ENCODE measurements at regions of chr11 and their contacts with region 1.

Region 1: GRCh38 chr11:117226388-117227385 is 5.2 kb downstream of the PCSK7 start:
- DNase-seq: peak in 1 of 2 donors; percentile 58
- ATAC-seq: peak; percentile 58 to 81 (median 71)
- H3K4me3 ChIP-seq: no peak overlapping the region
- H3K27ac ChIP-seq: peak overlapping the region in 1 of 10 donors; percentile 38
- H3K4me1 ChIP-seq: peaks cover 14 to 40% (median 26%) of the 10 kb centered on the region in 9 donors
- H3K27me3 ChIP-seq: no peaks in the 10 kb centered on the region
- CTCF ChIP-seq: peak; percentile 71 to 90 (median 83)

Region 2: DNA sequence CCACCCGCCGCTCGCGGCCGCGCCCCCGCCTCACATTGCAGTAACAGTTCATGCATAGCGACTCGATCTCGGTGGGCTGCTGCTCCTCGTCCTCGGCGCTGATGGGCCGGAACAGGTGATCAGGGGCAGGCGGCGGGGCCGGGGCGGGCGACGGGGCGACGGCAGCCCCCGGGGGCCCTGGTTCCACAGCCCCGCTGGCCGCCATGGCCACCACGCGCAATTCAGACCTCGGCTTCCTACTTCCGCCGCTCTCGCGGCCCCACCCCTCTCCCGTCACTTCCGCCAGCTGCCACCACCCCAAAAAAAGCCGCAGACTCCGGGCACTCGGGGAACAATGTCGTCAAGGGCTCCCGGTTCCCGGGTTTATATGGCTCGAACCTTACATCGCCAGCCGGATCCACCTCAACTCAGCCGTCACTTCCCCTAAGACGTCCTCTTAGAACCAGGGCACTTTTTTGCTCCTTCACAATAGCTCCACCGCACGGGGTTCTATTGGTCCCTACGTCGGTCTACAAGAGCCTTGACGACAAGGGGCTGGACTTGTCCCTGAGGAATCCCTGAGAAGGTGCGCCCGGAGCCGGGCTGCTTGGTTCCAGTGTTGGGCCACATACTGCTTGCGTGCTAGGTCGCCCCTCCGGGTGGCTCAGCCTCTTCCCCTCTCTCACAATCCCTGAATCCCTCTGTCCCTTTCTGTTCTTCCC is 438.8 kb before region 1 on chr11 and contains the start of gene ZPR1:
- intact Hi-C with region 1: loop called in 9 of 10 experiments (anchors 2 to 10 kb)
- DNase-seq: peak; percentile 86 to 87
- ATAC-seq: peak; percentile 83 to 92 (median 90)
- H3K4me3 ChIP-seq: peak within 1 kb of the TSS; percentile 84 to 100 (median 94)
- H3K27ac ChIP-seq: peak within 1 kb of the TSS; percentile 2 to 94 (median 87)
- H3K4me1 ChIP-seq: peaks cover 7 to 35% (median 24%) of the 10 kb centered on the region in 9 donors
- H3K27me3 ChIP-seq: no peaks in the 10 kb centered on the region
- CTCF ChIP-seq: no peak
- total RNA-seq, gene ZPR1: 17.3 to 32.9 (median 22.6) TPM

Region 3: GRCh38 chr11:116871248-116871647 is 355.4 kb before region 1 on chr11:
- intact Hi-C with region 1: loop called in 6 of 10 experiments (anchors 5 to 10 kb)
- DNase-seq: peak in 1 of 2 donors; percentile 44
- ATAC-seq: peak in 6 of 8 donors; percentile 40 to 75 (median 51)
- H3K4me3 ChIP-seq: no peak overlapping the region
- H3K27ac ChIP-seq: peak overlapping the region in 9 of 10 donors; percentile 9 to 73 (median 58)
- H3K4me1 ChIP-seq: peaks cover 0 to 89% (median 30%) of the 10 kb centered on the region in 9 donors
- H3K27me3 ChIP-seq: no peaks in the 10 kb centered on the region
- CTCF ChIP-seq: no peak

Region 4: DNA sequence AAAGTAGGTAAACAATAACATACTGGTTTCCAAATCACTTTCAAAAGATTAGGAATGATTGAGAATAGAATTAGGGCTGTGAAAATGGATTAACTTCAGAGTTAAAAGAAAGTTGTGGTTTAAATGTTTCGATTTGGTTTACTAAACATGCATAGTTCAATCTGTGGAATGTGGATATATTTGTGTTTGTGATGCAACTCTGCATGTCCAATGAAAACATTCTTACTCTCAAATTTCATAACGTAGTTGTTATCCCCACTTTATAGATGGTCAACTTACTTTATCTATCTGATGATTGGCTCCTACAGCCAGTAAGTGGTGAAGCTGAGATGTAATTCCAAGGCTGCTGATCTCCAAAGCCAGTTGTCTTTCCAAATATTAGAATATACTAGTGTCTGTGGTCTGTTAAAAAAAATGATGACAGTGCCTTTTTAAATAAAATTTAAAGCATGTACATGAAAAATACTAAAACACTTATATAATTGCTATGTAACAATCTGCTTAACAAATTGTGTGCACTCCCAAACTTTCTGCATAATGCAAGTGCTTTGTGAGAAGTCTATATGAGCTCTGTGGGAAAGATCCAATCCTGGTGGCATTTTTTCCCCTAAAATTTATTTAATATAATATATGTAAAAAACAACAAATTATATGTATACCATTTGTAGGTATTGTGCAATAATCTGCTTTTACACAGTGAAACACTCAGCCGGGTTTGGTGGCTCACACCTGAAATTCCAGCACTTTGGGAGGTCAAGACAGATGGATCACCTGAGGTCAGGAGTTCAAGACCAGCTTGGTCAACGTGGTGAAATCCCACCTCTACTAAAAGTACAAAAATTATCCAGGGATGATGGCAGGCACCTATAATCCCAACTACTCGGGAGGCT is 118.7 kb before region 1 on chr11:
- intact Hi-C with region 1: loop called in 6 of 10 experiments (anchors 5 to 10 kb)
- DNase-seq: no peak
- ATAC-seq: no peak
- H3K4me3 ChIP-seq: no peak overlapping the region
- H3K27ac ChIP-seq: peak overlapping the region in 3 of 10 donors; percentile 52 to 64 (median 56)
- H3K4me1 ChIP-seq: peaks cover 0 to 6% (median 0%) of the 10 kb centered on the region in 9 donors
- H3K27me3 ChIP-seq: no peaks in the 10 kb centered on the region
- CTCF ChIP-seq: peak in 1 of 9 donors; percentile 2

Region 5: GRCh38 chr11:117143871-117144476 is 82.7 kb before region 1 on chr11 and contains the start of gene PAFAH1B2:
- intact Hi-C with region 1: loop called in 3 of 10 experiments (anchors 5 to 10 kb)
- DNase-seq: peak; percentile 96 to 97
- ATAC-seq: peak; percentile 96 to 98 (median 97)
- H3K4me3 ChIP-seq: peak within 1 kb of the TSS; percentile 71 to 97 (median 84)
- H3K27ac ChIP-seq: peak within 1 kb of the TSS; percentile 86 to 97 (median 94)
- H3K4me1 ChIP-seq: peaks cover 0 to 47% (median 39%) of the 10 kb centered on the region in 9 donors
- H3K27me3 ChIP-seq: no peaks in the 10 kb centered on the region
- CTCF ChIP-seq: no peak
- total RNA-seq, gene PAFAH1B2: 48.8 to 71.5 (median 64.2) TPM

Region 6: GRCh38 chr11:117333917-117334316 is 107.2 kb after region 1 on chr11:
- intact Hi-C with region 1: no loop called
- DNase-seq: no peak
- ATAC-seq: no peak
- H3K4me3 ChIP-seq: no peak overlapping the region
- H3K27ac ChIP-seq: no peak overlapping the region
- H3K4me1 ChIP-seq: peaks cover 0 to 13% (median 5%) of the 10 kb centered on the region in 9 donors
- H3K27me3 ChIP-seq: no peaks in the 10 kb centered on the region
- CTCF ChIP-seq: no peak